GM10248 (cell line): ENCODE measurements at regions of chr1 and their contacts with region 1.

Region 1: DNA sequence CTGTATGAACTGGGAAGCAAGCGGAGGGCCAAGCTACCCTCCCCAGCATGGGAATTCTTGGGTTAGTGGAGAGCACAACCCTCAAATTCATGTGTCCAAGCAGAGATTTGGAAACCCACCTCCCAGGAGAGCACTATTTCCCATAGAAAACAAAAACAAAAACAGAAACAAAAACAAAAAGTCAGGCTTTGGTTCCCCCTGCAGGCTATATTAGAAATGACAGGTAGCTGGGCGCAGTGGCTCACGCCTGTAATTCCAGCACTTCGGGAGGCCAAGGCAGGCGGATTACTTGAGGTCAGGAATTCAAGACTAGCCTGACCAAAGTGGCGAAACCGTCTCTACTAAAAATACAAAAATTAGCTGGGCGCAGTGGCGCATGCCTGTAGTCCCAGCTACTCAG is 10.8 kb downstream of the MINDY1 start:
- DNase-seq: no peak
- CTCF ChIP-seq: peak; percentile 73

Region 2: DNA sequence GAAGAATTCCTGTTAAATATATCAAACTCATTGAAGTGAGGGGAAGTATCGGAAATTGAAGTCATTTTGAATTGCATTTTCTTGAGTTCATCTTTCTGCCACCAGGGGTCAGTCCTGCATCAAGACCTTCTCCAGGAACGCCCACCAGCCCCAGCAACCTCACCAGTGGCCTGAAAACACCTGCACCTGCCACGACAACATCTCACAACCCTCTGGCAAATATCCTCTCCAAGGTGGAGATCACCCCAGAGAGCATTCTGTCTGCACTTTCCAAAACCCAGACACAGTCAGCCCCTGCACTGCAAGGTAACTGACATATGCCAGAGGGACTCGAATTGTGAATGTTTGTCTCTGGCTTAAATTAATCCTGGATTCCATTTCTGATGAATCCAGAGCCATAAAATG is 531.5 kb before region 1 on chr1:
- CTCF ChIA-PET with region 1: interaction called, 11 read pairs
- POLR2A ChIA-PET with region 1: no interaction called
- DNase-seq: peak; percentile 83
- CTCF ChIP-seq: peak; percentile 81

Region 3: DNA sequence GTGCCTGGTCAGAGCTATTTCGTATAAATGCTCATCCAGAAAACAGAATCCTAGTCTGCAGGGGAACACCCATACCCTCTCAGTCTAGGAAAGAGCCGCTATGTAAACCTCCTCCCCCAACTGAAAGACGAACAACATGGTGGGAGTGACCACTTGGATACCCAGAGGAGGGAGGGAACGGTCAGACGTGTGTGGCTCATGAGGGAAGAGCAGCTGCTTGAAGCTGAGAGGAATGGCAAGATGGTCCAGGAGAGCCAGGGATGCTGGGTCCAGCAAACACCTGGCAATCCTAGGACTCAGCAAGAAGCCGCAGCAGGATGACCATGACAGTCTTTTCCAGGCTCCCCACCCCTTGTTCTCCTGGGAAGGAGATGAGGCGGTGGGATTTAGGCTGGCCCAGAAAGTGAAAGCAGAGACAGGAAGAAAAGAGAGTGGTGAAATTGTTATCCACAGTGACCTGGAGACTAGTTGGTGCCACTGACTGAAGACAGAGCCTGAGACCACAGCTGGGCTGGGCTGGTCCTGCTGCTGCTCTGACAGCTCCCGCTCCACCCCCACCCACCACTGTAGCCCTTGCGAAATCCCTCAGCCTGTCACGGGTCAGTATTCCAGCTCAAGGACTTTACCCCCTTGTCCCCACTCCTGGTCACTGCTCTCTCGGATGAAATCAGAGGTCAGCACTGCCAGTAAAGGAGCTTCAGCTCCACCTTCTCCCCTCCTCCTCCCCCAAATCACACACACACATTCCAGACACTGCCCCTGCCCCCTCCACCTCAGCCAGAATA is 24.9 kb before region 1 on chr1:
- CTCF ChIA-PET with region 1: interaction called, 27 read pairs
- POLR2A ChIA-PET with region 1: no interaction called
- DNase-seq: no peak
- CTCF ChIP-seq: no peak

Region 4: GRCh38 chr1:150979092-150980056 is 16.5 kb before region 1 on chr1:
- CTCF ChIA-PET with region 1: interaction called, 158 read pairs
- POLR2A ChIA-PET with region 1: no interaction called
- DNase-seq: peak; percentile 90
- CTCF ChIP-seq: peak; percentile 100

Region 5: GRCh38 chr1:151006327-151007052 is 10.6 kb after region 1 on chr1 and contains the start of gene MINDY1:
- CTCF ChIA-PET with region 1: interaction called, 99 read pairs
- POLR2A ChIA-PET with region 1: interaction called, 3 read pairs
- DNase-seq: peak; percentile 71
- CTCF ChIP-seq: peak; percentile 28

Region 6: DNA sequence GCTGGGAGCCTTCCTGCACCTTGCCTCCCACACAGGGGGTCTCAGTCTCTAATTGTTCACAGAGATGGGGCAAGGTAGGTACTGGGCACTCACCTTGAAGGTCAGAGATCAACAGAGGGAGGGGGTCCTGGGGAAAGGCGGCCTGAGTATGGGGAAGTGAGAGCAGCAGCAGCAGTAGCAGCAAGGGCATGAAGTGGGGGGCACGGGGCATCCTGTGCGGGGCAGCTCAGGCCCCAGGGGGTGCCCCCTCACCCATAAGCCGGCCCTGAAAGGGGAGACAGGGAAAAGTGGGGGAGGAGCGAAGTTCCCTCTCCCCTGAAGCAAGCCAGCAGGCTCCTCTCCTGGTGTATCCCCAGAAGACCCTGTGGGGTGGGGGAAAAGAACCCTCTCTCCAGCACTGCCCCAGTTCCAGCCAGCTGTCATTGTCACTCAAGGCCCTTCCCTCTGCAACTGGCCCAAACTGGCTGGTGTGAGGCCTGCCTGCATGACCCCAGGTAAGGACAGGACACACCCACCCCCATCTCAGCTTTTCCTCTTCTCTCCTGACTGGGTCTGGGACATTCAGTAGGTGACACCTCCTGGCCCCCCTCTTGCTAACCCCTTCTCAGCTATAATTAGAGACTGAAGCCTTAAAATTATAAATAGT is 146.6 kb after region 1 on chr1:
- CTCF ChIA-PET with region 1: no interaction called
- POLR2A ChIA-PET with region 1: no interaction called
- DNase-seq: no peak
- CTCF ChIP-seq: no peak

Region 7: GRCh38 chr1:151210830-151211229 is 214.9 kb after region 1 on chr1:
- CTCF ChIA-PET with region 1: no interaction called
- POLR2A ChIA-PET with region 1: no interaction called
- DNase-seq: no peak
- CTCF ChIP-seq: no peak

Region 8: GRCh38 chr1:151327223-151327902 is 331.5 kb after region 1 on chr1 and contains the start of gene PI4KB:
- CTCF ChIA-PET with region 1: no interaction called
- POLR2A ChIA-PET with region 1: no interaction called
- DNase-seq: peak; percentile 95
- CTCF ChIP-seq: no peak